Left ventricle myocardium inferior (tissue), 1 donor: ENCODE measurements at regions of chr5 and their contacts with region 1.

Region 1: DNA sequence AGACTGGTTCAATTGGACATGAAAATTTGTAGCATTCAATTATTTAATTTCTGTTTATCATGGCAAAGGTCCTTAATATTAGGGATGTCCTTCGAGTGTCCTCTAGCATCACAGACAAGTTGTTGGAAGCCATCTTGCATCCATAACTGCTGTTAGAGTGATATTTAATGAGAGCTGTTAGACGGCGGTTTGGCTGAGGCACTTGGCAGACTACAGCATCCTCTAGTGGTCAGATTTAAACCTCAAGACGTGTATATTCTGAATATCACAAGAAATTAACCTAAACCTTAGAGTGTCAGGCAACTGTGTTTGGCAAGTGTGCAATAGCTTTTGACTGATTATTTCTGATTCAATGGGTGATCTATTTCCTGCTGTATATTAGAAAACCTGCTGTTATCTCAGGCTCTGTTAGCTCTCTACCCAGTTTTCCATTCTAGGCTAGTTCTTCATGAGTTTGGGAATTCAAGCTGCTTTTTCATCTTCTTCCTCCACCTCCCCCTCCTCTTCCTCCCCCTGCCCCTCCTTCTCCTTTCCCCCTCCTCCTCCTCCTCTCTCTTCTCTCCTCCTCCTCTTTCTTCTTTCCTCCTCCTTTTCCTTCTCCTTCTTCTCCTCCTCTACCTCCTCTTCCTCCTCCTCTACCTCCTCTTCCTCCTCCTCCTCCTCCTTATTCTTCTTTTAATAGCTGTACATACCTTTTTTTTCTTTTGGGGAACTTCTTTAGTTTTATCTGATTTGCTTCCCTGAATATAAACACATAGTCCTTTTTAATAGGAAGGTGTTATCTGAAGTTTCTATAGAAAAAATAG is 8.6 kb downstream of the SPINK1 start:
- DNase-seq: peak; percentile 17
- H3K4me3 ChIP-seq: no peak overlapping the region
- H3K27ac ChIP-seq: no peak overlapping the region
- H3K4me1 ChIP-seq: no peaks in the 10 kb centered on the region
- H3K27me3 ChIP-seq: peaks cover 32% of the 10 kb centered on the region
- CTCF ChIP-seq: peak; percentile 87

Region 2: GRCh38 chr5:147427521-147428401 is 395.1 kb before region 1 on chr5:
- intact Hi-C with region 1: no loop called
- DNase-seq: no peak
- H3K4me3 ChIP-seq: no peak overlapping the region
- H3K27ac ChIP-seq: peak overlapping the region; percentile 18
- H3K4me1 ChIP-seq: peaks cover 37% of the 10 kb centered on the region
- H3K27me3 ChIP-seq: no peaks in the 10 kb centered on the region
- CTCF ChIP-seq: no peak

Region 3: DNA sequence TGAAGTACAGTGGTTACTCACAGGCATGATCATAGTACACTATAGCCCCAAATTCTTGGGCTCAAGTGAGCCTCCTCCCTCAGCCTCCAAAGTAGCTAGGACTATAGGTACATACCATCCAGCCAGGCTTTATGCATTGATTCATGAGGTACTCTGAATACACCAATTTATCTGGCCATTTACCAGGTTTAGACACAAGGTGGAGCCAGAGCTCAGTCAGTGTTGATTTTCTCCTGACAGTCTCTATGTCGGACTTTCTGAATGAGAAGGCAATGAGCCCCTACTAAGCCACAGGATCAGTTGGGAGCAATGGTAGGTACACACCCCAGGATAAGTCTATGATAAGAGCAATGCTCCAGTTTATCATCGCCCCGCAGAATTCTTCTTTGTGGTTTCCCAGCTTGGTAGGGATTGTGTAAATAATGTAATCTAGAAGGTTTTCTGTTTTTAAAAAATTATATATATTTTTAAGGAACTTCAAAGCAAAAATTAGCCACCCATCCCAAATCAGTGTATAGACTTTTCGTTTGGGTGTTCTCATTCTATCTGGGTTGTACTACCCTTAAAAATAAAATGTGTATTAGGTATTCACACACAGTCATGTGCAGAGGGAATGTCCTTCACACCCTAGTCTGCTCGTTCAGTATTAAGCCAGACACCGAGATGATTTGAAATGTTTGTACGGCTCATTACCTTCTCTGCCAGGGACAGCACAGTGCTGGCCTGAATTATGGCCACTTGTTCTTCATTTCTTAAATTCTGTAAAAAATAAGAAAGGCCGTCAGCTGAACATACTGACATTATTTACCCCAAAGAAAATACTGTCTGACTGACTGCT is 194.6 kb before region 1 on chr5:
- intact Hi-C with region 1: loop called (anchors 5 kb)
- DNase-seq: no peak
- H3K4me3 ChIP-seq: no peak overlapping the region
- H3K27ac ChIP-seq: no peak overlapping the region
- H3K4me1 ChIP-seq: no peaks in the 10 kb centered on the region
- H3K27me3 ChIP-seq: peaks cover 5% of the 10 kb centered on the region
- CTCF ChIP-seq: peak; percentile 78

Region 4: DNA sequence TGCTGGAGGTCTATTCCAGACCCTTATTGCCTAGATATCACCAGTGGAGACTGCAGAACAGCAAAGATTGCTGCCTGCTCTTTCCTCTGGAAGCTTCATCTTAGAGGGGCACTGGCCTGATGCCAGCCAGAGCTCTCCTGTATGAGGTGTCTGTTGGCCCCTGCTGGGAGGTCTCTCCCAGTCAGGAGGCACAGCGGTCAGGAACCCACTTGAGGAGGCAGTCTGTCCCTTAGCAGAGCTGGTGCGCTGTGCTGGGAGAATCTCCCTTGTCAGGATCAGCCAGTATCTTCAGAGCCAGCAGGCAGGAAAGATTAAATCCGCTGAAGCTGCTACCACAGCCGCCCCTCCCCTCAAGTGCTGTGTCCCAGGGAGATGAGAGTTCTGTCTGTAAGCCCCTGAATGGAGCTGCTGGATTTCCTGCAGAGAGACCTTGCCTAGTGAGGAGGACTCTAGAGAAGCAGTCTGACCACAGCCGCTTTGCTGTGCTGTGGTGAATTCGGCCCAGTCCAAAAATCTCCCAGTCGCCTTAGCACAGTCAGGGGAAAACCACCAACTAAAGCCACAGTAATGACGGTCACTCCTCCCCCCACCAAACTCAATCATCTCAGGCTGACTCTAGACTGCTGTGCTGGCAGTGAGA is 164.5 kb before region 1 on chr5:
- intact Hi-C with region 1: no loop called
- DNase-seq: no peak
- H3K4me3 ChIP-seq: no peak overlapping the region
- H3K27ac ChIP-seq: no peak overlapping the region
- H3K4me1 ChIP-seq: no peaks in the 10 kb centered on the region
- H3K27me3 ChIP-seq: peaks cover 8% of the 10 kb centered on the region
- CTCF ChIP-seq: no peak